Pancreas (tissue), 10 donors: ENCODE measurements at regions of chr17 and their contacts with region 1.

Region 1: GRCh38 chr17:74864866-74865395 is 5.2 kb upstream of the GRIN2C start:
- DNase-seq: peak; percentile 50 to 90 (median 78)
- ATAC-seq: peak; percentile 63 to 82 (median 75)
- H3K4me3 ChIP-seq: no peak overlapping the region
- H3K27ac ChIP-seq: no peak overlapping the region
- H3K4me1 ChIP-seq: peaks cover 0 to 9% (median 0%) of the 10 kb centered on the region in 3 donors
- H3K27me3 ChIP-seq: peaks cover 0 to 6% (median 3%) of the 10 kb centered on the region in 4 donors
- CTCF ChIP-seq: peak; percentile 88 to 93 (median 92)

Region 2: DNA sequence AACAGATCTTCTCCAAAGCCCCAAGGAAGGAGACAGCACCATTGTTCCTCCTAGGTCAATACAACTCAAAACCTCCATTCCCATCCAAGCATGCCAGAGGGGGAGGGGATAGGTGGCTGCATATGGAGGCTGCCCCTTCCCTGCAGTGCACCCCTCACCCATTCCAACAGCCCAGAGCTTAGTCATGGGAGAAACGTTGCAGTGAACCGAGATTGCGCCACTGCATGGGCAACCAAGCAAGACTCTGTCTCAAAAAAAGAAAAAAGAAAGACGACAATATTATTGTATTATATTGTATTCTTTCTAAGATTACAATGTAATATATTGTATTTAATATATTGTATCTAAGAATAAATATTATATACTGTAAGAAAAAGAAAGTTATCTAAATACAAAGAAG is 205.0 kb before region 1 on chr17:
- intact Hi-C with region 1: loop called in 1 of 3 experiments (anchors 10 kb)
- DNase-seq: no peak
- ATAC-seq: no peak
- H3K4me3 ChIP-seq: no peak overlapping the region
- H3K27ac ChIP-seq: no peak overlapping the region
- H3K4me1 ChIP-seq: no peaks in the 10 kb centered on the region
- H3K27me3 ChIP-seq: peaks cover 0 to 4% (median 0%) of the 10 kb centered on the region in 4 donors
- CTCF ChIP-seq: no peak

Region 3: GRCh38 chr17:74748529-74749365 is 116.2 kb before region 1 on chr17 and contains the start of gene NHERF1:
- intact Hi-C with region 1: loop called in 2 of 3 experiments (anchors 5 to 10 kb)
- DNase-seq: peak; percentile 93 to 99 (median 96)
- ATAC-seq: peak; percentile 77 to 84 (median 82)
- H3K4me3 ChIP-seq: peak within 1 kb of the TSS; percentile 55 to 98 (median 88)
- H3K27ac ChIP-seq: peak within 1 kb of the TSS; percentile 88 to 97 (median 95)
- H3K4me1 ChIP-seq: peaks cover 18 to 28% (median 24%) of the 10 kb centered on the region in 3 donors
- H3K27me3 ChIP-seq: no peaks in the 10 kb centered on the region
- CTCF ChIP-seq: peak in 1 of 4 donors; percentile 14
- total RNA-seq, gene NHERF1: 40.1 to 78.5 (median 55.9) TPM

Region 4: GRCh38 chr17:74790161-74791054 is 74.5 kb before region 1 on chr17:
- intact Hi-C with region 1: loop called in 2 of 3 experiments (anchors 5 kb)
- DNase-seq: no peak
- ATAC-seq: peak in 2 of 4 donors; percentile 29 to 47
- H3K4me3 ChIP-seq: no peak overlapping the region
- H3K27ac ChIP-seq: no peak overlapping the region
- H3K4me1 ChIP-seq: no peaks in the 10 kb centered on the region
- H3K27me3 ChIP-seq: no peaks in the 10 kb centered on the region
- CTCF ChIP-seq: no peak

Region 5: DNA sequence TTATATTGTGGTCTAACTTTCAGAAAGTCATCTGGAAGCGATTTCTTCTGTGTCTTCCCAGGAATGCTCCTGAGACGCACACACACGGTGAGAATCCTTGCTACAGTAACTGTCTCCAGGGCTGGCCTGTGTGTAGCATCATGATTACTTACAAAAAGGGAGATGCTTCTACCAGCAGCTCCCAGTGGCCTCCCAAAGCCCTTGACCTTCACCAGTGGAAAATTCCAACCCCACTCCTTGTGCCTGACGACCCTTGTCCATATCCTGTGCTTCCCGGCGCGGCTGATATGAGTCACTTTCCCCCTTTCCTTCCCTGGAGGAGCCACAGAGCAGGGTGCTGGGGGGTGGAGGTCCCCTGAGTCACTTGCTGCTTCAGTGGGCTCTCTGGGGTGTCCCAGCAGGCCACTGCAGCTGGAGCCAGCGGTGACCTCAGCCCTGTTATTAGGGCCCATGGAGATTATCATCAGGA is 66.7 kb before region 1 on chr17:
- intact Hi-C with region 1: loop called in 2 of 3 experiments (anchors 5 kb)
- DNase-seq: no peak
- ATAC-seq: no peak
- H3K4me3 ChIP-seq: no peak overlapping the region
- H3K27ac ChIP-seq: no peak overlapping the region
- H3K4me1 ChIP-seq: no peaks in the 10 kb centered on the region
- H3K27me3 ChIP-seq: no peaks in the 10 kb centered on the region
- CTCF ChIP-seq: no peak